ENCODE measurements at regions of chr10 and their contacts with region 1.

Region 1: GRCh38 chr10:115417585-115418265 is 324.6 kb downstream of the ATRNL1 start:
- DNase-seq: peak; percentile 53
- H3K4me3 ChIP-seq: no peak overlapping the region
- H3K27ac ChIP-seq: no peak overlapping the region
- H3K4me1 ChIP-seq: no peaks in the 10 kb centered on the region
- CTCF ChIP-seq: peak; percentile 82

Region 2: GRCh38 chr10:114550756-114551635 is 866.7 kb before region 1 on chr10:
- CTCF ChIA-PET with region 1: no interaction called
- POLR2A ChIA-PET with region 1: interaction called, 4 read pairs
- intact Hi-C with region 1: loop called (anchors 10 kb)
- DNase-seq: peak; percentile 67
- H3K4me3 ChIP-seq: no peak overlapping the region
- H3K27ac ChIP-seq: no peak overlapping the region
- H3K4me1 ChIP-seq: peaks cover 16% of the 10 kb centered on the region
- CTCF ChIP-seq: peak; percentile 93

Region 3: DNA sequence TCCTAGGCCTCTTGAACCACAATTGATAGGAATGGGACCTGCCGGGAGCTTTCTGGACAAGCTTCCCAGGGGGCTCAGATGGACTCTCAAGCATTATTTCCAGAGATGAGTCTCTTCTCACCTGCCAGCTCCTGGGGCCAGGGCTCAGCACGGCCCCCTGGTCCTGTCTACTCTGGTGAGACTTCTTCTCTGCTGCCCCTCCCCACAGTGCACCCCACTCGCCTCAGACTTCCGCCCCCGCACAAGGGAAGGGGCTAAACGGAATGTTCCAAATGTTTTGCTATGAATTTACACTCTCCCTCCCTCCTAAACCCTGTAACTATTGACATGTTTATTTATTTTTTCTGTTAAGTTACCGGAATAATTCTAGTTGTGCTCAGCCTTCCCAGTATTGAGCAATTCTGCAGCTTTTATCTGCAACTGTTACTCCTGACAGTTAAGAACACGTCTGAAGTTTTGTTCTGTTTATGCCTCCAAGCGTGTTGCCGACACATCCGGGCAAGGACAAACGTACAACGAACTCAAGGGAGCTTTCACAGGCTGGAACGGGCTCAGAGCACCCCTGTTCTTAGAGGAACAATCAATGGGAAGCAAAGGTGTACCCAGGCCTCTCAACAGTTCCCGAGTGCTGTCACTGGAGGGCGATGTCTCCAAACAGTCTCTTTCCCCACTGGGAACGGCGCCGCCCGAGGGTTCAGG is 541.0 kb before region 1 on chr10:
- CTCF ChIA-PET with region 1: no interaction called
- POLR2A ChIA-PET with region 1: no interaction called
- intact Hi-C with region 1: loop called (anchors 5 kb)
- DNase-seq: peak; percentile 61
- H3K4me3 ChIP-seq: no peak overlapping the region
- H3K27ac ChIP-seq: no peak overlapping the region
- H3K4me1 ChIP-seq: no peaks in the 10 kb centered on the region
- CTCF ChIP-seq: peak; percentile 77

Region 4: DNA sequence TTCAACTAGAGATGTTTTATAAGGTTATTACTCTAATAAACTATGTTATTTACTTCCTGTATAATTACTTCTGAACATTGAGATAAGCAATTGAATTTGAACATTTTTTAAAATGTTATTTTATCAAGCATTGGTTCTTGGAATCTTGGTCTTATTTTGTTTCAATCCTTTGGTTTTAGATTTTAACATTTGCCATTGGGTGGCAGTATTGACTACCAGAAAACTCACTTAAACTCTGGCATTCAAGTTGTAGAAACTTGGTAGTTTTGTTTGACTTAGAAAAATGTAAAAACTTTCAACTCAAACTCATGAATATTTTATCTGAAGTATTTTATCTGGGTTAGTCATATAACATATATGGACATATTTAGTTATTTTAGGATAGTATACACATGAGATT is 276.5 kb before region 1 on chr10:
- CTCF ChIA-PET with region 1: no interaction called
- POLR2A ChIA-PET with region 1: no interaction called
- intact Hi-C with region 1: loop called (anchors 10 kb)
- DNase-seq: no peak
- H3K4me3 ChIP-seq: no peak overlapping the region
- H3K27ac ChIP-seq: no peak overlapping the region
- H3K4me1 ChIP-seq: no peaks in the 10 kb centered on the region
- CTCF ChIP-seq: peak; percentile 79

Region 5: DNA sequence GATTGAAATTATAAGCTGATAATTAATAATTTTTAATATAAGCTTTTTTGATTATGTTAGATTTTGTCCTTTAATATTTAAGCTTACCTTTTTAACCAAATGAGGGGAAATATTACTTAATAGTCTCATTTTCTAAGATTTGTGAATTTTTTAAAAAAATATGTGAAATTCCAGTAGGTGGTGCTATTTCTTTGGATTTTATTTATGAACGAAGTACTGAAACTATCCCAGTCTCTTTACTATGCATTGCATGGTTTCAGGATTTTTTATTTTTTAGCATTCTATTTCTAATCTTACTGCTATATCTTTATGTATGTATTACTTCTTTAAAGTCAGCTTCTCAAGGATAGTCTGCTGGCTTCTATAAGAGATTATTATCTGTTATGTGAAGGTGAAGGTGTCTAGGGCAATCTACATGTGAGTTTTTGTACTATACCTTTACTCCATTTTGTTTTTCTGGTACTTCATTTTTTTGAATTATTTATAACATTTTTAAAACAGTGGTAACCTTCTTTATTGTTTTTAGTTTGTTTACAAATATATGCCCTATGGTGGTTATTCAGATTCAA is 246.2 kb before region 1 on chr10:
- CTCF ChIA-PET with region 1: no interaction called
- POLR2A ChIA-PET with region 1: no interaction called
- intact Hi-C with region 1: loop called (anchors 1 kb)
- DNase-seq: peak; percentile 24
- H3K4me3 ChIP-seq: no peak overlapping the region
- H3K27ac ChIP-seq: no peak overlapping the region
- H3K4me1 ChIP-seq: no peaks in the 10 kb centered on the region
- CTCF ChIP-seq: peak; percentile 83

Region 6: DNA sequence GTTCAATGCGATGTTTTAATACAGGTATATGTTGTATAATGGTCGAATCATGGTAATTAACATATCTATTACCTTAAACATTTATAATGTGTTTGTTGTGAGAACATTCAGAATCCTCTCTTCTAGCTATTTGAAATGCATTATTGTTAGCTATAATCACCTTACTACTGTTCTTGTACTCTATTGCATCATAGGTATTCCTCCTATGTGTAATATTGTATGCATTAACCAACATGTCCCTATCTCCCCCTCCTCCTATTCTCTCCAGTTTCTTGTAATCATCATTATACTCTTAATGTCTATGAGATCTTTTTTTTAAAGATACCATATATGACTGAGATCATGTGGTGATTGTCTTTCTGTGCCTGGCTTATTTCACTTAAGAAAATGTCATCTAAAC is 89.4 kb before region 1 on chr10:
- CTCF ChIA-PET with region 1: no interaction called
- POLR2A ChIA-PET with region 1: no interaction called
- intact Hi-C with region 1: no loop called
- DNase-seq: no peak
- H3K4me3 ChIP-seq: no peak overlapping the region
- H3K27ac ChIP-seq: no peak overlapping the region
- H3K4me1 ChIP-seq: no peaks in the 10 kb centered on the region
- CTCF ChIP-seq: no peak

Region 7: DNA sequence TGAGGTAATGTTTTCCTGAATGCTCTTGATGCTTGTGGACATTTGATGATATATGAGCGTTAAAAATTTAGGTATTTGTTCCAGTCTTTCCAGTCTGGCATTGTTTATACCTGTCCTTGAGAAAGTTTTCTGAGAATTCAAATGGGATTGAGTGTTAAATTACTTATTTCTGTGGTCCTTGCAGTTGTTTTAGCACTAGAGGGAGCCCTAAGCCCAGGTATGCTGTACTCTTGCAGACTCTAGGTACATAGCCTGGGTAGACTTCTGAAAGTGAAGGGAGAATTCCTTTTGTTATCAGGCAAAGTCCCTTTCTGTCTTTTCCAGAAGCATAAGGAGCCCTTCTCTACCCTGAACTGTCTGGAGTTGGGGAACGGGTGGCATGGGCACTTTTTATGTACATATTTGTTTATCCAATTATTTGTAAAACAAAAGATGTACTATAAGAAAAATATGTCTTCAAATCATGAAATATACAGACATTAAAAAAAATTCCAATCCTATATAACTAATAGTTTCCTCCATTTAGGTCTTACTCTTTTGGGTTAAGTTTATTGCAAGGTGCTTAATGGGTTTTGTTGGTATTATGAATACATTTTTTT is 62.5 kb before region 1 on chr10:
- CTCF ChIA-PET with region 1: no interaction called
- POLR2A ChIA-PET with region 1: interaction called, 4 read pairs
- intact Hi-C with region 1: loop called (anchors 2 kb)
- DNase-seq: peak; percentile 65
- H3K4me3 ChIP-seq: no peak overlapping the region
- H3K27ac ChIP-seq: no peak overlapping the region
- H3K4me1 ChIP-seq: no peaks in the 10 kb centered on the region
- CTCF ChIP-seq: peak; percentile 88

Measured in OCI-LY7 (cell line).